PC-9 (cell line): ENCODE measurements at regions of chr11 and their contacts with region 1.

Region 1: GRCh38 chr11:65888163-65888814 is at the start of gene FIBP:
- DNase-seq: peak; percentile 92 to 97
- H3K4me3 ChIP-seq: peak within 1 kb of the TSS; percentile 80
- H3K27ac ChIP-seq: peak within 1 kb of the TSS; percentile 51
- H3K4me1 ChIP-seq: peaks cover 28% of the 10 kb centered on the region
- H3K27me3 ChIP-seq: no peaks in the 10 kb centered on the region
- CTCF ChIP-seq: peak; percentile 90
- total RNA-seq, gene FIBP: 105 and 141 TPM in 2 replicates

Region 2: GRCh38 chr11:64196626-64197025 is 1691.7 kb before region 1 on chr11:
- CTCF ChIA-PET with region 1: no interaction called
- POLR2A ChIA-PET with region 1: interaction called, 14 read pairs
- intact Hi-C with region 1: no loop called
- DNase-seq: no peak
- H3K4me3 ChIP-seq: no peak overlapping the region
- H3K27ac ChIP-seq: no peak overlapping the region
- H3K4me1 ChIP-seq: no peaks in the 10 kb centered on the region
- H3K27me3 ChIP-seq: no peaks in the 10 kb centered on the region
- CTCF ChIP-seq: no peak

Region 3: DNA sequence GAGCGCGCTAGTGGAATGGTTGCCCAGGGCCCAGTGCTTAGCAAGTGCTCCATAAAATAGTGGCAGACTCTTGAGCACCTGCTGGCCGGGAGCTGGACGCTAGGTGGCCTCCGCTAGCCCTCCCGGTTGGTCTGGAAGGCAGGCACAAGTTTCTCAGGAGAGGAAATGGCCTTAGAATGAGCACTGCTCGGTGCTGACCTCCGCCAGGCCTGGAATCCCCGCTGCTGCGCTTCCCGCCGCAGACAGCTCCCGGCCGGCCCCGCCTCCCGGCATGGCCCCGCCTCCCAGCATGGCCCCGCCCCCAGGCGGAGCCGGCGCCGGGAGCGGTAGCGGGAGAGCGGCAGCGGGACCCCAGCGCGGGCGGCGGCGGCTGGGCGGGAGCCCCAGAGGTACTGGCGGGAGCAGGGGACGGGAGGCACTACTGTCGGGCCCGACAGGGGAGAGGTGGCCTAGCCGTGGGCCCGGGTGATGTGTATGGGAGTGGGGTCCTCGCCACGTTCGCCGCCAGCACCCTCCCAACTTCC is 250.4 kb before region 1 on chr11 and contains the start of gene SIPA1:
- CTCF ChIA-PET with region 1: interaction called, 5 read pairs
- POLR2A ChIA-PET with region 1: no interaction called
- intact Hi-C with region 1: loop called (anchors 5 kb)
- DNase-seq: peak; percentile 86 to 94
- H3K4me3 ChIP-seq: peak within 1 kb of the TSS; percentile 57
- H3K27ac ChIP-seq: peak within 1 kb of the TSS; percentile 18
- H3K4me1 ChIP-seq: peaks cover 17% of the 10 kb centered on the region
- H3K27me3 ChIP-seq: no peaks in the 10 kb centered on the region
- CTCF ChIP-seq: peak; percentile 68
- total RNA-seq, gene SIPA1: 65.6 and 81.3 TPM in 2 replicates

Region 4: DNA sequence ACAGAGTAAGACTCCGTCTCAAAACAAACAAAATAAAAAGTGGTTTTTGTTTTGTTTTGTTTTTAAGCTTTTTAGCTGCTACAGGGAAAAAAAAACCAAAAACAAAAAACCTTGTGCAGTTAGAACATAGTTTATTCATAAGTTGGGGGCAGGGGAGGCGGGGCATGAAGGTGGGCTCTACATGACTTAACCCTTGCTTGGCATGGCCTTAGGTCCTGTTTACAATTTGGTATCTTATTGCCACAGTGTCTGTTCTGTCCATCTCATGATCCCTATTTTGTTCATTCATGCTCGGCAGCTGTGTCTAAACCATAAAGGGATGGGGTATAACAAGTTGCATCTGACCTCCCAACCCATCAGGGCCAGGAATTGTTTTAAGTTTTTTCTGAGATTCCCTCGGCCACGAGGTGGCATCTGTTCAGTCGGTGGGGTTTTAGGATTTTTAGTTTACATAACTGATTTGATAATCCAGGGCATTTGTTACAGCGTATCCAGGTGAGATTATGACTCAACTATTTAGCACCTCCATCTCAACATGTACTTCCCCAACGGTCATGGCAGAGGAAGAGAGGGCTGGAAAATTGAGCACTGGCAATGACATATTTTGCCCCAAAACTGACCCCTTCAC is 114.4 kb before region 1 on chr11:
- CTCF ChIA-PET with region 1: interaction called, 11 read pairs
- POLR2A ChIA-PET with region 1: no interaction called
- intact Hi-C with region 1: no loop called
- DNase-seq: no peak
- H3K4me3 ChIP-seq: no peak overlapping the region
- H3K27ac ChIP-seq: no peak overlapping the region
- H3K4me1 ChIP-seq: peaks cover 32% of the 10 kb centered on the region
- H3K27me3 ChIP-seq: no peaks in the 10 kb centered on the region
- CTCF ChIP-seq: no peak

Region 5: GRCh38 chr11:65911682-65912568 is 23.6 kb after region 1 on chr11:
- CTCF ChIA-PET with region 1: interaction called, 9 read pairs
- POLR2A ChIA-PET with region 1: interaction called, 25 read pairs
- intact Hi-C with region 1: no loop called
- DNase-seq: peak; percentile 63 to 70
- H3K4me3 ChIP-seq: no peak overlapping the region
- H3K27ac ChIP-seq: peak overlapping the region; percentile 67
- H3K4me1 ChIP-seq: peaks cover 77% of the 10 kb centered on the region
- H3K27me3 ChIP-seq: no peaks in the 10 kb centered on the region
- CTCF ChIP-seq: no peak; the same call in 1 of the 2 replicates

Region 6: DNA sequence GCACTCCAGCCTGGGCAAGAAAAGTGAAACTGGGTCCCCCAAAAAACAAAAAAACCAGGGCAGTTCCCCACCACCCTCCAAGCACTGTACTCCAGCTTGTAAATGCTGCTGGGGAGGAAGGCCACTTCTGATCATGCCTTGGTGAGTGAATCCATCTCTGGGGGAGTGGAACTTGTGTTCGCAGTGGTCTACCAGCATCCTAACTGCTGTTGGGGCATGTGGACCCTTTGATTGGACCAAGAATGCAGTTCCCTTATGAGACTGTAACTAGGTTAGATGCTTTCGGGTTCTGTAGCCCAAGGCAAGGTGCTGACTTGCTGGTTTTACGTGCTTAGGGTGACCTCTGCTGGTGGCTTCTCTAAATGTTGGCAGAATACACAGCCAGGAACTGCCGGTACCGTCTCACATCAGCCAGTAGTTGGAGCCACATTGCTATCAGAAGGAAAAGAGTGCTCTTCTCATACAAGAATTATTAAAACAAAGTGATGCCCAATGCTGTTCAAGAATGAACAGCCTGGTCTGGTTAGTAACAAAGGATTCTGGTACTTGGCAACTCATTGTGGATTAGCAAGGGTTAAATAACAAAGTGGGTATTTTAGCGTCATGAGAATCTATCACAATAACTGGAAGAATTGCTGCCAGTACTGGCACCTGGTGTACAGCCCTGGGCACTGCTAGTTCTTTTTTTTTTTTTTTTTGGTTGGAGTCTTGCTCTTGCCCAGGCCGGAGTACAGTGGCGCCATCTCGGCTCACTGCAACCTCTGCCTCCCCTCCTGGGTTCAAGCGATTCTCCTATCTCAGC is 100.7 kb after region 1 on chr11:
- CTCF ChIA-PET with region 1: interaction called, 17 read pairs
- POLR2A ChIA-PET with region 1: no interaction called
- intact Hi-C with region 1: loop called (anchors 1 kb)
- DNase-seq: peak; percentile 87 to 92
- H3K4me3 ChIP-seq: no peak overlapping the region
- H3K27ac ChIP-seq: no peak overlapping the region
- H3K4me1 ChIP-seq: peaks cover 4% of the 10 kb centered on the region; the same call in 1 of the 2 replicates
- H3K27me3 ChIP-seq: no peaks in the 10 kb centered on the region
- CTCF ChIP-seq: peak; percentile 99

Region 7: DNA sequence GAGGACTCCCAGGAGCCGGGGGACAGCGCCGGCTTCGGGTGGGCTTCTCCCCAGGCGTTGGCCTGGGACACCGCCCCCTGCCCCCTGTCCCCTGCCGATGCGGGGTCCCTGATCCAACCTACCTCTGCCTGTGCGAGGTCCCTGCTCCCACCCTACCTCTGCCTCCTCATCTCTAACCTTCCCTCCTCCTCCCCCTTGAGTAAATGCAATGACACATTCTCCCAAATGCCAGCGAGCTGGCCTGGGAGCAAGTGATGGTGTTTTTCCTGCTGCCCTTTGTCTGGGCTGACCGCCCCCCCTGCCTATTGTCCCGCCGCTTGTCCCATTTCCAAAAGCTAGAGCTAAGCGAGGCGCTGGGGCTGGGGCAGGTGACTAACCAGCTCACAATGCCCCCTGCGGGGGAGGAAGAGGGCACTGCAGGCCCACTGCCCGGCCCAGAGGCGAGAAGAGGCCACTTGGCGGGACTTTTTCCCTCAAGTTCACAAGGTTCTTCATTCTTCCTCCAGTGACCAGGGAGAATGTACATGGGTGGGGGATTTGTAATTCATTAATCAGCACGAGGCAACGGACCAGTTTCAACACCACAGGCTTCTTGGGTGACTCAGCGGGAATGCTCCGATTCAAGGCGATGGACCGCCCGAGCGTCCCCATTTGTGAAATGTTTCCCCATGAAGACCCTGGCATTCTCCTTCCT is 1485.8 kb after region 1 on chr11:
- CTCF ChIA-PET with region 1: no interaction called
- POLR2A ChIA-PET with region 1: interaction called, 26 read pairs
- intact Hi-C with region 1: no loop called
- DNase-seq: peak; percentile 98 to 99
- H3K4me3 ChIP-seq: peak overlapping the region; percentile 87
- H3K27ac ChIP-seq: peak overlapping the region; percentile 99
- H3K4me1 ChIP-seq: peaks cover 59% of the 10 kb centered on the region
- H3K27me3 ChIP-seq: no peaks in the 10 kb centered on the region
- CTCF ChIP-seq: peak; percentile 64